ENCODE measurements at regions of chr11 and their contacts with region 1.

Region 1: GRCh38 chr11:118051611-118052461 is 25.0 kb upstream of the TMPRSS4 start:
- DNase-seq: no peak
- H3K4me3 ChIP-seq: no peak overlapping the region
- H3K27ac ChIP-seq: no peak overlapping the region
- H3K4me1 ChIP-seq: no peaks in the 10 kb centered on the region
- H3K27me3 ChIP-seq: no peaks in the 10 kb centered on the region
- CTCF ChIP-seq: no peak
- EP300 ChIP-seq: no peak
- POLR2A ChIP-seq: no peak

Region 2: GRCh38 chr11:117426269-117426685 is 625.6 kb before region 1 on chr11:
- intact Hi-C with region 1: loop called in 2 of 4 experiments (anchors 5 to 10 kb)
- DNase-seq: peak; percentile 62 to 82 (median 77)
- H3K4me3 ChIP-seq: no peak overlapping the region
- H3K27ac ChIP-seq: no peak overlapping the region
- H3K4me1 ChIP-seq: peaks cover 6% of the 10 kb centered on the region
- H3K27me3 ChIP-seq: no peaks in the 10 kb centered on the region
- CTCF ChIP-seq: peak; percentile 77 to 83 (median 78)
- EP300 ChIP-seq: no peak
- POLR2A ChIP-seq: no peak

Region 3: GRCh38 chr11:117438371-117439000 is 613.4 kb before region 1 on chr11:
- intact Hi-C with region 1: loop called in 1 of 4 experiments (anchors 10 kb)
- DNase-seq: no peak
- H3K4me3 ChIP-seq: no peak overlapping the region
- H3K27ac ChIP-seq: no peak overlapping the region
- H3K4me1 ChIP-seq: no peaks in the 10 kb centered on the region
- H3K27me3 ChIP-seq: no peaks in the 10 kb centered on the region
- CTCF ChIP-seq: no peak
- EP300 ChIP-seq: no peak
- POLR2A ChIP-seq: no peak

Region 4: GRCh38 chr11:117807482-117808327 is 244.1 kb before region 1 on chr11:
- intact Hi-C with region 1: loop called in 3 of 4 experiments (anchors 5 kb)
- DNase-seq: peak; percentile 60 to 86 (median 82)
- H3K4me3 ChIP-seq: no peak overlapping the region
- H3K27ac ChIP-seq: no peak overlapping the region
- H3K4me1 ChIP-seq: peaks cover 4% of the 10 kb centered on the region
- H3K27me3 ChIP-seq: no peaks in the 10 kb centered on the region
- CTCF ChIP-seq: peak; percentile 72 to 87 (median 86)
- EP300 ChIP-seq: no peak
- POLR2A ChIP-seq: no peak

Region 5: GRCh38 chr11:117843666-117844484 is 208.0 kb before region 1 on chr11:
- intact Hi-C with region 1: loop called in 1 of 4 experiments (anchors 5 kb)
- DNase-seq: peak; percentile 78 to 90 (median 89)
- H3K4me3 ChIP-seq: no peak overlapping the region
- H3K27ac ChIP-seq: no peak overlapping the region
- H3K4me1 ChIP-seq: peaks cover 3% of the 10 kb centered on the region
- H3K27me3 ChIP-seq: no peaks in the 10 kb centered on the region
- CTCF ChIP-seq: peak; percentile 94 to 96 (median 96)
- EP300 ChIP-seq: no peak
- POLR2A ChIP-seq: peak; percentile 16

Region 6: DNA sequence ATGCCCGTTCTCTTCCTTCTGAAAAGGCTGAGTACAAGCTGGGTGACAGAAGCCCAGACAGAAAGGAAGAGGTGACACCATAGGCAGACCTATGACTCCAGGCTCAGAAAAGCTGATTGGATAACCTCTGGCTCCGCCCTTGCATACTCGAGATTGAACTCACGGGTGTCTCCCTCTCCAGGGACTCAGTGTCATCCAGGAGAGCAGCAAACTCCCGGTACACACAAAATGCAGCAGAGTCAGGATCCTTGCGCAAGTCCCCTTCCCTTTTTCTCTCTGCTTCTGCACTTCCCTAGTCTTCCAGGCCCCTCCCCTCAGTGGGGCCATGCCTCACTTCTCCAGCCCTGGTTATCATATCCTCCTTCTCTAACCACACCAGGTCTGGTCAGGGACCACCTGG is 91.0 kb after region 1 on chr11:
- intact Hi-C with region 1: no loop called
- DNase-seq: no peak
- H3K4me3 ChIP-seq: no peak overlapping the region
- H3K27ac ChIP-seq: no peak overlapping the region
- H3K4me1 ChIP-seq: peaks cover 4% of the 10 kb centered on the region
- H3K27me3 ChIP-seq: no peaks in the 10 kb centered on the region
- CTCF ChIP-seq: no peak
- EP300 ChIP-seq: no peak
- POLR2A ChIP-seq: no peak